Activated CD8-positive, alpha-beta T cell treated with anti-CD3 and anti-CD28 coated beads, Interleukin-2, amount 10 ng/mL, durations not matched to agents 7 days and 5 days (primary cell): ENCODE measurements at regions of chr2 and their contacts with region 1.

Region 1: GRCh38 chr2:113138428-113139322 is 11.3 kb downstream of the IL1RN start:
- DNase-seq: peak; percentile 82
- ATAC-seq: peak; percentile 83
- H3K4me3 Mint-ChIP-seq: peak overlapping the region; percentile 47
- H3K27ac Mint-ChIP-seq: peak overlapping the region; percentile 76
- H3K4me1 Mint-ChIP-seq: peaks cover 34% of the 10 kb centered on the region
- H3K27me3 Mint-ChIP-seq: peaks cover 3% of the 10 kb centered on the region

Region 2: DNA sequence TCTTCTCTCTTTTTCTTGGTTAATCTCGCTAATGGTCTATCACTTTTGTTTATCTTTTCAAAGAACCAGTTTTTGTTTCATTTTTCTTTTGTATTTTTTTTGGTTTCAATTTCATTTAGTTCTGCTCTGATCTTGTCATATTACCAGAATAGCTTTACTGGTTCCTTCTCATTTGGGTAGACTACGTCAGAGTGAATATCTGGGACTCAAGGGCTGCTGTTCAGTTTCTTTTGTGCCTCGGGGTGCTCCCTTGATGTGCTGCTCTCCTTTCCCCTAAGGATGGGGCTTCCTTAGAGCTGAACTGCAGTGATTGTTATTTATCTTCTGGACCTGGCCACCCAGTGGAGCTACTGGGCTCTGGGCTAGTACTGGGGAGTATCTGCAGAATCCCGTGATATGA is 40.6 kb before region 1 on chr2:
- CTCF ChIA-PET with region 1: interaction called, 12 read pairs
- POLR2A ChIA-PET with region 1: no interaction called
- DNase-seq: no peak
- ATAC-seq: peak; percentile 79
- H3K4me3 Mint-ChIP-seq: peak overlapping the region; percentile 60
- H3K27ac Mint-ChIP-seq: peak overlapping the region; percentile 79
- H3K4me1 Mint-ChIP-seq: peaks cover 28% of the 10 kb centered on the region
- H3K27me3 Mint-ChIP-seq: peaks cover 9% of the 10 kb centered on the region

Region 3: DNA sequence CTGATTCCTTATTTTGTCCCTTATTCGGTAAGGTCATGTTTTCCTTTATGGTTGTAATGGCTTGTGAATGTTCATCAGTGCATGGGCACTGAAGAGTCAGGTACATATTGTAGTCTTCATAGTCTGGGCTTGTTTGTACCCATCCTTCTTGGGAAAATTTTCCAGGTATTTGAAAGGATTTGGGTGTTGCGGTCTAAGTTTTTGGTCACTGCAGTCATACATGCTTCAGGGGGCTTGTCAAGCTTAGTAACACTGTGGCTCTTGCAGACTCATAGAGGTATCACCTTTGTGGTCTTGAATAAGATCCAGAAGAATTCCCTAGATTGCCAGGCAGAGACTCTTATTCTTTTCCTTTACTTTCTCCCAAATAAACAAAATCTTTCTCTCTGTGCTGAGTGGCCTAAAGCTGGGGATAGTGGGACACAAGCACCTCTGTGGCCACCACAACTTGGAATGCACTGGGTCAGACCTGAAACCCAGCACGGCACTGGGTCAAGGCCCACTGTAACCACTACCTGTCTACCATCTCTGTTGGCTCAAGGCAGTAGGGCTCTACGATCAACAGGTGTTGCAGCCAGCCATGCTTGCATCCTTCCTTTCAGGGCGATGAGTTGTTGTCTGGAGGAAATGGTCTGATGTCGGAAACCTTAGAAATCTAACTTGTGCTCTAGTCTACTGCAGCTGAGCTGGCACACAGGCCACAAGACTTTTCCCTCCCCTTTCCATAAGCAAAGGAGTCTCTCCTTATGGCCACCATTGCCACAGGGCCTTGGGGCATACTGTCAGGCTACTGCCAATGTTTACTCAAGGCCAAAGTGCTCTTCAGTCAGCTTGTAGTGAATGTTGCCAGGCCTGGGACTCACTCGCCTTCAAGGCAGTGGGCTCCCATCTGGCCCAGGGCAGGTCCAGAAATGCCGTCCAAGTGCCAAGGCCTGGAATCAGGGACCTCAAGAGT is 10.2 kb after region 1 on chr2:
- CTCF ChIA-PET with region 1: interaction called, 31 read pairs
- POLR2A ChIA-PET with region 1: no interaction called
- DNase-seq: no peak
- ATAC-seq: no peak
- H3K4me3 Mint-ChIP-seq: no peak overlapping the region
- H3K27ac Mint-ChIP-seq: no peak overlapping the region
- H3K4me1 Mint-ChIP-seq: peaks cover 9% of the 10 kb centered on the region
- H3K27me3 Mint-ChIP-seq: peaks cover 23% of the 10 kb centered on the region

Region 4: DNA sequence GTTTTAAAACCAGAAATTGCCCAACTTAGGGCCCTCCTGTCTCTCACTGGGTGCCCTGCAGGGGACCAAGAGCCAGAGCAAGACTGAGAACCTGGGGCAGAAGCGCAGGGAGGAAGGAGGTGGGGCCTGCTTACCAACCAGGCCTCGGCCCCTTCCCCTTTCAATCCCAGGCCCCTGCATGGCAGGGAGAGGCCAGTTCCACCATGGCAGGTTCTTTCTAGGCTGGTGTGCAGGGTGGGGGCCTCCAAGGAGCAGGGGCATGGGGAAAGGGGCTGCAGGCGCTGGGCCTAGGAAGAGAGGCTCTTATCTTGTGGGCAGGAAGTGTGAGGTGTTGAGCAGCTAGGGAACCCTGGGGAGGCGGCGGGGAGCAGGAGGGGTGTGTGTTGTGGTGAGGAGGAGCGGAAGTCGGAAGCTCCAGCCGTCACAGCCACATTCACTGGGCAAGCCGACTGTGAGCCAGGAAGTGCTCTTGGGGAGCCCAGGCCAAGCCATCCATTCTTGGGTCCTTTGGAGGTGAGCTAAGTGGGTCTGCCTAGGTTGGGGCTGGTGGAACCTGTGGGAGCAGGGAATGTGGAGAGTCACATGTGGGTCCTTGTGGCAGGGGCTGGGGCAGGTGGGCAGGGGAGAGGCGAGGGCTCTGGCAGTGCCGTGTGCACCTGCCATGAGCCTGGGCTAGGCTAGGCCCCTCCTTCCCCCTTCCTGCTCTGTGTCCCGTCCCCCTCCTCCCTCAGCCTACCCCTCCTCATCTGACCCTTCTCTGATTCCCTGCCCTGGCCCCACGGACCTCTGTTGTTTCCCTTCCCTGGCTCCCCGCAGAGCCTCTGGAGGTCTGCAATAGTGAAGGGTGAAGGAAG is 35.1 kb after region 1 on chr2 and contains the start of gene PSD4:
- CTCF ChIA-PET with region 1: interaction called, 370 read pairs
- POLR2A ChIA-PET with region 1: interaction called, 33 read pairs
- DNase-seq: peak; percentile 96
- ATAC-seq: peak; percentile 75
- H3K4me3 Mint-ChIP-seq: peak within 1 kb of the TSS; percentile 83
- H3K27ac Mint-ChIP-seq: peak within 1 kb of the TSS; percentile 91
- H3K4me1 Mint-ChIP-seq: peaks cover 70% of the 10 kb centered on the region
- H3K27me3 Mint-ChIP-seq: peaks cover 2% of the 10 kb centered on the region
- total RNA-seq, gene PSD4: 394 to 404 TPM

Region 5: GRCh38 chr2:113248997-113249770 is 110.5 kb after region 1 on chr2:
- CTCF ChIA-PET with region 1: interaction called, 17 read pairs
- POLR2A ChIA-PET with region 1: no interaction called
- DNase-seq: peak; percentile 86
- ATAC-seq: peak; percentile 69
- H3K4me3 Mint-ChIP-seq: no peak overlapping the region
- H3K27ac Mint-ChIP-seq: peak overlapping the region; percentile 77
- H3K4me1 Mint-ChIP-seq: peaks cover 56% of the 10 kb centered on the region
- H3K27me3 Mint-ChIP-seq: no peaks in the 10 kb centered on the region